BJ (cell line): ENCODE measurements at regions of chr7 and their contacts with region 1.

Region 1: GRCh38 chr7:157250605-157251228 is 86.1 kb upstream of the DNAJB6 start:
- DNase-seq: no peak
- H3K4me3 ChIP-seq: no peak overlapping the region
- H3K27me3 ChIP-seq: no peaks in the 10 kb centered on the region
- CTCF ChIP-seq: peak; percentile 86

Region 2: DNA sequence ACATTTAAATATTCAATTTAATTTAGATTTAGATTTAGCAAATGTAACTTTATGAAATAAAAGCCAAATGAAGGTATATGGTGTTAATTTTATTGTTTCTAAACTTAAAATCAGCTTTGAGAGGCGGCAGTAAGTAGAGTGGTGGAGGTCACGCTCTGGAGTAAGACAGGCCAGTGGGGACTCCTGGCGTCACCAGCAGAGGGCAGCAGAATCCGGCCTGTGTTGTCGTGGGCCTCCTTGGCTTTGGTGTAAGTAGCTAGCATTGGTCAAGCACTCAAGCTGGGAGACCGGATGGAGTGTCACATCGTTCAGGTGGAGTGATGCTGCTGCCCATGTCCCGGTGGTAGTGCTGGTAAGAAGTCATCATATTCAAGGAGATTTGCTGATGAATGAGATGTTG is 12.6 kb before region 1 on chr7:
- CTCF ChIA-PET with region 1: interaction called, 16 read pairs
- POLR2A ChIA-PET with region 1: no interaction called
- DNase-seq: no peak
- H3K4me3 ChIP-seq: no peak overlapping the region
- H3K27me3 ChIP-seq: no peaks in the 10 kb centered on the region
- CTCF ChIP-seq: no peak